ENCODE measurements at regions of chr14 and their contacts with region 1.

Region 1: DNA sequence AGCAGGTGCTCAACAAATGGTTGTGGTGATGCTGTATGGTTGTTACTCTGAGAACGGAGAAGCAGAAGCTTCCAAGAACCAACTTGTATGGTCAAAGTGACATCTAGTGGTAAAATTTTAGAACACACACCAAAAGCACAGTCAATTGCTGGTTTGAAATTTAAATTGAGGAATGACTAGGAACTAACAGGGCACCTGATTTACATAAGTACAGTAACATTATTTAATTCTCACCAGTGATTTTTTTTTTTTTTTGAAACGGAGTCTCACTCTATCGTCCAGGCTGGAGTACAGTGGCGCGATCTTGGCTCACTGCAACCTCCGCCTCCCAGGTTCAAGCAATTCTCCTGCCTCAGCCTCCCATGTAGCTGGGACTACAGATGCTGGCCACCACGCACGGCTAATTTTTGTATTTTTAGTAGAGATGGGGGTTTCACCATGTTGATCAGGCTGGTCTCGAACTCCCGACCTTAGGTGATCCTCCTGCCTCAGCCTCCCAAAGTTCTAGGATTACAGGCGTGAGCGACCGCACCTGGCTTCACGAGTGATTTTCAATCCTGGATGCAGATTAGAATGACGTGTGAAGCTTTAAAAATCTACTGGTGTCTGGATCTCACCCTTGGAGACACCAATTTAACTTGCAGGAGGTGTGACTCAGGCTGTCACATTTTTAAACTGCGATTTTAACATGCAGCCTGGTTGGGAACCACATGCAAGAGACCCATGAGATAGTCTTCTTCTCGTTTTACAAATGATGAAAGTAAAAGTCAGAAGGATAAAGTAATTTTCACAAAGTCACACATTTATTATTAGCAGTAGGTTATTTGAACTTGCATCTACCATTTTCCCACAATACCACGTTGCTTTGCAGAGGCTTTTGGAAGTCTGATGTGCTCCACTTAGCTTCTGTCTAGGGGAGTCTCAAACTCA is 14.1 kb upstream of the NUMB start:
- DNase-seq: no peak
- ATAC-seq: peak in 7 of 8 donors; percentile 59 to 84 (median 73)
- H3K4me3 ChIP-seq: no peak overlapping the region
- H3K27ac ChIP-seq: no peak overlapping the region
- H3K4me1 ChIP-seq: peaks cover 0 to 10% (median 0%) of the 10 kb centered on the region in 9 donors
- H3K27me3 ChIP-seq: no peaks in the 10 kb centered on the region
- CTCF ChIP-seq: peak; percentile 44 to 84 (median 74)

Region 2: DNA sequence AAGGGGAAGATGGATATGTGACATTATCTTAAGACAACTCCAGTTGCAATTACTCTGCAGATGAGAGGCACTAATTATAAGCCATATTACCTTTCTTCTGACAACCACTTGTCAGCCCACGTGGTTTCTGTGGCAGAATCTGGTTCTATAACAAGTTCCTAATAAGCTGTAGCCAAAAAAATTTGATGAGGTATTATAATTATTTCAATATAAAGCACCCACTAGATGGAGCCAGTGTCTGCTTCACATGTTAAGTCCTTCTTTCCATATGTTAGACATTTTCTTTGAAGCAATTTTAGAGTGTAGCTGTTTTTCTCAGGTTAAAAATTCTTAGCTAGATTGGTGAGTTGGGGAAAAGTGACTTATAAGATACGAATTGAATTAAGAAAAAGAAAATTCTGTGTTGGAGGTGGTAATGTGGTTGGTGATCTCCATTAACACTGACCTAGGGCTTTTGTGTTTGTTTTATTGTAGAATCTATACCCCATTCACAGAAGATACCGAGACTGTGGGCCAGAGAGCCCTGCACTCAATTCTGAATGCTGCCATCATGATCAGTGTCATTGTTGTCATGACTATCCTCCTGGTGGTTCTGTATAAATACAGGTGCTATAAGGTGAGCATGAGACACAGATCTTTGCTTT is 299.2 kb before region 1 on chr14:
- intact Hi-C with region 1: loop called in 9 of 10 experiments (anchors 2 to 10 kb)
- DNase-seq: no peak
- ATAC-seq: no peak
- H3K4me3 ChIP-seq: no peak overlapping the region
- H3K27ac ChIP-seq: no peak overlapping the region
- H3K4me1 ChIP-seq: peaks cover 0 to 18% (median 0%) of the 10 kb centered on the region in 9 donors
- H3K27me3 ChIP-seq: no peaks in the 10 kb centered on the region
- CTCF ChIP-seq: peak; percentile 16 to 62 (median 55)

Region 3: DNA sequence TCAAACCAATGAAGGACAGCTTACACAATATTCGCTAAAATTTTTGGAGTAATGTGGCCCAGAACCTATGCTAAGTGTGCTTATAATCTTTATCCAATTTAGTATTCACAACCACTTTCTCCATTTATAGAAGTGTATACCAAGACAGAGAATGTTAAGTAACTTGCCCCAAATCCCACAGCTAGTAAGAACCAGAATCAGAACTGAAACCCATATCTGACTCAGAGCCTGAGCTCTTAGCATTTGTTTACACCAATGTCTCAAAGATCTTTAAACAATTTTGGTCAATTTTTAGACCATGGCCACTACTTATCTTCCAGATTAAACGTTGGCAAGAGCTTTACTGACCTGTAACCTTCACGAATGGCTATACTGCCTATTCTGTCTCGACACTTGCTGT is 182.2 kb before region 1 on chr14:
- intact Hi-C with region 1: loop called (anchors 1 to 5 kb)
- DNase-seq: no peak
- ATAC-seq: no peak
- H3K4me3 ChIP-seq: no peak overlapping the region
- H3K27ac ChIP-seq: no peak overlapping the region
- H3K4me1 ChIP-seq: no peaks in the 10 kb centered on the region
- H3K27me3 ChIP-seq: no peaks in the 10 kb centered on the region
- CTCF ChIP-seq: no peak

Region 4: GRCh38 chr14:73295198-73295796 is 177.2 kb before region 1 on chr14:
- intact Hi-C with region 1: loop called (anchors 1 to 5 kb)
- DNase-seq: peak in 1 of 2 donors; percentile 14
- ATAC-seq: peak in 1 of 8 donors; percentile 22
- H3K4me3 ChIP-seq: no peak overlapping the region
- H3K27ac ChIP-seq: no peak overlapping the region
- H3K4me1 ChIP-seq: no peaks in the 10 kb centered on the region
- H3K27me3 ChIP-seq: no peaks in the 10 kb centered on the region
- CTCF ChIP-seq: peak; percentile 57 to 86 (median 75)